Calu3 (cell line): ENCODE measurements at regions of chr17 and their contacts with region 1.

Region 1: GRCh38 chr17:39687811-39688518 is at the start of gene PGAP3:
- DNase-seq: peak; percentile 100
- H3K4me3 Mint-ChIP-seq: peak within 1 kb of the TSS; percentile 64
- H3K27ac Mint-ChIP-seq: peak within 1 kb of the TSS; percentile 63
- H3K4me1 Mint-ChIP-seq: peaks cover 27% of the 10 kb centered on the region
- H3K27me3 Mint-ChIP-seq: no peaks in the 10 kb centered on the region
- CTCF ChIP-seq: no peak
- total RNA-seq, gene PGAP3: 1,186 and 1,276 TPM in 2 replicates

Region 2: DNA sequence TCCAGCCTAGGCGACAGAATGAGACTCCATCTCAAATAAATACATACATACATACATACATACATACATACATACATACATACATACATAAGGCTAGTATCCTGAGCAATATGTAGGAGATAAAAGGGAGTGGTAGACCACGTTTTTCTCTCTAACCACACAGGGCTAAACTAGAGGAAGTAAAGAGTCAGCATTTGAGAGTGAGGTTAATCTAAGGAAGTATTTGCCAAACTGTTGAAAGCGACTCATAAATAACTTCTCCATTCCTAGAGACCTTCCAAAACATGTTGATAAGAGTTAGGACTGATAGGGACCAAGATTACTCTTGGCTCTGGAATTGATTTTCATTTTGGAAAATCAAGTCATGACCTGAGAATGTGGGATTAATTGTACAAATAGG is 149.1 kb before region 1 on chr17:
- CTCF ChIA-PET with region 1: no interaction called
- intact Hi-C with region 1: no loop called
- DNase-seq: no peak
- H3K4me3 Mint-ChIP-seq: no peak overlapping the region
- H3K27ac Mint-ChIP-seq: no peak overlapping the region
- H3K4me1 Mint-ChIP-seq: peaks cover 38% of the 10 kb centered on the region
- H3K27me3 Mint-ChIP-seq: no peaks in the 10 kb centered on the region
- CTCF ChIP-seq: no peak

Region 3: DNA sequence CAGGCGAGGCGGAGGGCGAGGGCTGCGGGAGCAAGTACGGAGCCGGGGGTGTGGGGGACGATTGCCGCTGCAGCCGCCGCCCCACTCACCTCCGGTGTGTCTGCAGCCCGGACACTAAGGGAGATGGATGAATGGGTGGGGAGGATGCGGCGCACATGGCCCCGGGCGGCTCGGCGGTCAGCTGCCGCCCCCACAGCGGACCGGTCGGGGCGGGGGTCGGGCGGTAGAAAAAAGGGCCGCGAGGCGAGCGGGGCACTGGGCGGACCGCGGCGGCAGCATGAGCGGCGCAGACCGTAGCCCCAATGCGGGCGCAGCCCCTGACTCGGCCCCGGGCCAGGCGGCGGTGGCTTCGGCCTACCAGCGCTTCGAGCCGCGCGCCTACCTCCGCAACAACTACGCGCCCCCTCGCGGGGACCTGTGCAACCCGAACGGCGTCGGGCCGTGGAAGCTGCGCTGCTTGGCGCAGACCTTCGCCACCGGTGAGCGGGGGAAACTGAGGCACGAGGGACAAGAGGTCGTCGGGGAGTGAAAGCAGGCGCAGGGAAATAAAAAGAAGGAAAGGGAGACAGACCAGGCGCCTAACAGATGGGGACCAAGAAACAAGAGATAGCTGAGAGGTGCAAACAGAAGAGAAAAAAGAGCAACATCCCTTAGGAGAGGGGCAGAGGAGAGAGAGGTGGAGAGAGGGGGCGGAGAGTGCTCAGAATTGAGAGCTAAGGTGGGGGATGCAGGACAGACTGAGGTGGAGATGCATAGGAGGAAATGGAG is 19.6 kb before region 1 on chr17 and contains the start of gene PNMT:
- CTCF ChIA-PET with region 1: interaction called, 34,714 read pairs
- intact Hi-C with region 1: loop called (anchors 1 kb)
- DNase-seq: peak; percentile 100
- H3K4me3 Mint-ChIP-seq: peak within 1 kb of the TSS; percentile 24
- H3K27ac Mint-ChIP-seq: peak within 1 kb of the TSS; percentile 0
- H3K4me1 Mint-ChIP-seq: peaks cover 65% of the 10 kb centered on the region
- H3K27me3 Mint-ChIP-seq: peaks cover 69% of the 10 kb centered on the region
- CTCF ChIP-seq: no peak
- total RNA-seq, gene PNMT: 1.3 and 3.2 TPM in 2 replicates

Region 4: DNA sequence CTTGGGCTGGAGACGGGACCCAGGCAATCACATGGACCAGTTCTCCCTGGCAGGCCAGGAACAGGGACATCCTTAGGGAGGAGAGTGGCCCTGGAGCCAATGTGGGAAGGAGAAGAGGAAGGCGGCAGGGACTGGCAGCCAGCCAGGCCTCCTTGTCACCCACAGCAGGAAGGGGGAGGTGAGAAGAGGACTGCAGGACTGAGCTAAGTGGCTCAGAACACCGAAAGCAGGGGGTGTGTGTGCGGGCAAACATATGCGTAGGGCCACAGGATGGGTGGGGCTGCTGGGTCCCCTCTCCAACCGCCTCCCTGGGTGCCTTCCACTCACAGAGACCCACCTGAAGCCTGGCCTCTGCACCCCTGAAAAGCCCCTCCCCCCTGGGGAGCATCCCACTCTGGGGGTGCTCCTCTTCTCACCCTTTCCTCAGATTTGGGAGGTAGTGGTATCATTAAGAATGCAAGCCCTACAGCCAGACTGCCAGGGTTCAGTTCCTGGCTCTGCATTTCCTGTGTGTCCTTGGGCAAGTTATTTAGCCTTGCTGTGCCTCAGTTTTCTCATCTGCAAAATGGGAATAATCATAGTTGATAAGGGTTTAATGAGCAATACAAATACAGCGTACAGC is 11.7 kb before region 1 on chr17:
- CTCF ChIA-PET with region 1: interaction called, 34,714 read pairs
- intact Hi-C with region 1: loop called (anchors 1 kb)
- DNase-seq: peak; percentile 100
- H3K4me3 Mint-ChIP-seq: peak overlapping the region; percentile 3
- H3K27ac Mint-ChIP-seq: peak overlapping the region; percentile 62
- H3K4me1 Mint-ChIP-seq: peaks cover 91% of the 10 kb centered on the region
- H3K27me3 Mint-ChIP-seq: peaks cover 6% of the 10 kb centered on the region
- CTCF ChIP-seq: no peak

Region 5: GRCh38 chr17:39717660-39718059 is 29.7 kb after region 1 on chr17:
- CTCF ChIA-PET with region 1: interaction called, 34,714 read pairs
- intact Hi-C with region 1: loop called (anchors 1 kb)
- DNase-seq: no peak
- H3K4me3 Mint-ChIP-seq: no peak overlapping the region
- H3K27ac Mint-ChIP-seq: peak overlapping the region; percentile 2
- H3K4me1 Mint-ChIP-seq: peaks cover 21% of the 10 kb centered on the region
- H3K27me3 Mint-ChIP-seq: no peaks in the 10 kb centered on the region
- CTCF ChIP-seq: no peak

Region 6: DNA sequence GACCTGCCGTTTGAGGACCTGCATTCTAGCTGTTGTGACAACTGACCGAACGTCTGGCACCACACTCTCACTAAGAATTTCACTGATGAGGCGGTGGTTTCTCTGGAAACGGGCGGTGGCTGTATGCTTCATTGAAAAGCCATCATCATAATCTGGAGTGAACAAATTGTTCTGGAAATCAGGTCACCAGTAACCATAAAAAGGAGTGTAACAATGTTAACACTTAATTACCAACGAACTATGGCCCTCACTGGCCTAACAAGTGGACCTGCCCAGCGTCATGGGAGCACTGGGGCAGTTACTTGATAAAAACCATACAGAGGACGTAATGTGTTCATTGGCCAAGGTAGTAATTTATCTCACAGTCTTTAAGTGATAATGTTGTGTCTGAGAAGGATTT is 944.3 kb after region 1 on chr17:
- CTCF ChIA-PET with region 1: no interaction called
- intact Hi-C with region 1: no loop called
- DNase-seq: peak; percentile 4
- H3K4me3 Mint-ChIP-seq: no peak overlapping the region
- H3K27ac Mint-ChIP-seq: no peak overlapping the region
- H3K4me1 Mint-ChIP-seq: no peaks in the 10 kb centered on the region
- H3K27me3 Mint-ChIP-seq: no peaks in the 10 kb centered on the region
- CTCF ChIP-seq: no peak